ENCODE measurements at regions of chr4 and their contacts with region 1.

Region 1: GRCh38 chr4:80365928-80366327 is 30.4 kb downstream of the CFAP299 start:
- DNase-seq: peak; percentile 27 to 61
- ATAC-seq: peak; percentile 85 to 95 (median 91)
- H3K4me3 ChIP-seq: no peak overlapping the region
- H3K27ac ChIP-seq: no peak overlapping the region
- H3K4me1 ChIP-seq: peaks cover 4% of the 10 kb centered on the region
- H3K27me3 ChIP-seq: no peaks in the 10 kb centered on the region
- CTCF ChIP-seq: peak; percentile 63

Region 2: DNA sequence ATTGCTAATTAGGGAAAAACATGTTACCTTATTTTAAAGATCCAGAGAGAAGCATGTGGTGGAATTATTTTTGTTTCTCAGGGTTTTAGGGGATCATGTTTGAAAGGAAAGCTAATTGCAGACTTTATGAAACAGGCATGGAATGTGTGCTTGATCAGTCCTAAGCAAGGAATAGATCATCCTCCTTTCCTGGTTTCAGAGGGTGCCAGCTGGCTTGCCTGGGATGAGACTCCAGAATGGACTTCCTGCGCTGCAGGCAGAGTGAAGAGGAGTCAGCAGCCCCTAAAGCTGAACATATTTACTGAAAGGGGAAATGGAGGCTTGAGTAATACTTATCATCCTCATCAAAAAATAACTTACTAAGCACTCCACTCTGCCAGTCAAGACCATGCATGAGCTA is 86.2 kb before region 1 on chr4:
- intact Hi-C with region 1: no loop called
- DNase-seq: no peak
- ATAC-seq: no peak
- H3K4me3 ChIP-seq: no peak overlapping the region
- H3K27ac ChIP-seq: no peak overlapping the region
- H3K4me1 ChIP-seq: no peaks in the 10 kb centered on the region
- H3K27me3 ChIP-seq: no peaks in the 10 kb centered on the region
- CTCF ChIP-seq: no peak

Region 3: DNA sequence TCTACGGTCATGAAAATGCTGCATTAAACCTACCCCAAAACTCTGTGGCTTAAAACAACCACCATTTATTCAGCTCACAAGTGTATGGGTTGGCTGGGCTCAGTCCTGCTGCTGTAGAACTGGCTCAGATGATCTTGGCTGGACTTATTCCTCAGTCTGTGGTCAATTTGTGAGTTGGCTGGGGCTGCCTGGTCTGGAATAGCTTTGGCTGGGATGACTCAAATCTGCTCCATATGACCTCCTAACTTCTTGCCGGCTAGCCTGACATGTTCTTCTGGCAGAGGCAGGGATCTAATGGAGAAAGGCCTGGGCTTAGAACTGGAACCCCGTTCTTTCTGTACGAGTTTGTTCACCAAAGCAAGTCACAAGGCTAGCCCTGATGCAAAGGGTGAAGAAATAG is 41.3 kb after region 1 on chr4:
- intact Hi-C with region 1: no loop called
- DNase-seq: peak; percentile 23 to 36
- ATAC-seq: peak; percentile 38 to 75 (median 45)
- H3K4me3 ChIP-seq: no peak overlapping the region
- H3K27ac ChIP-seq: no peak overlapping the region
- H3K4me1 ChIP-seq: no peaks in the 10 kb centered on the region
- H3K27me3 ChIP-seq: no peaks in the 10 kb centered on the region
- CTCF ChIP-seq: no peak

Region 4: GRCh38 chr4:80989921-80990544 is 624.1 kb after region 1 on chr4:
- intact Hi-C with region 1: loop called (anchors 2 kb)
- DNase-seq: no peak
- ATAC-seq: peak in 1 of 4 donors; percentile 42
- H3K4me3 ChIP-seq: no peak overlapping the region
- H3K27ac ChIP-seq: no peak overlapping the region
- H3K4me1 ChIP-seq: no peaks in the 10 kb centered on the region
- H3K27me3 ChIP-seq: no peaks in the 10 kb centered on the region
- CTCF ChIP-seq: peak; percentile 70

Region 5: GRCh38 chr4:81040012-81040659 is 674.2 kb after region 1 on chr4:
- intact Hi-C with region 1: loop called (anchors 5 to 10 kb)
- DNase-seq: no peak
- ATAC-seq: no peak
- H3K4me3 ChIP-seq: no peak overlapping the region
- H3K27ac ChIP-seq: no peak overlapping the region
- H3K4me1 ChIP-seq: no peaks in the 10 kb centered on the region
- H3K27me3 ChIP-seq: peaks cover 0 to 2% (median 0%) of the 10 kb centered on the region in 3 donors
- CTCF ChIP-seq: peak; percentile 47

Region 6: GRCh38 chr4:81052119-81053068 is 686.5 kb after region 1 on chr4:
- intact Hi-C with region 1: loop called (anchors 5 to 10 kb)
- DNase-seq: peak; percentile 33 to 49
- ATAC-seq: peak in 2 of 4 donors; percentile 65 to 71
- H3K4me3 ChIP-seq: no peak overlapping the region
- H3K27ac ChIP-seq: no peak overlapping the region
- H3K4me1 ChIP-seq: no peaks in the 10 kb centered on the region
- H3K27me3 ChIP-seq: no peaks in the 10 kb centered on the region
- CTCF ChIP-seq: peak; percentile 60

Region 7: GRCh38 chr4:81351654-81352445 is 985.9 kb after region 1 on chr4:
- intact Hi-C with region 1: loop called in 1 of 2 experiments (anchors 10 kb)
- DNase-seq: peak; percentile 60 to 68
- ATAC-seq: peak in 2 of 4 donors; percentile 52 to 72
- H3K4me3 ChIP-seq: no peak overlapping the region
- H3K27ac ChIP-seq: no peak overlapping the region
- H3K4me1 ChIP-seq: no peaks in the 10 kb centered on the region
- H3K27me3 ChIP-seq: no peaks in the 10 kb centered on the region
- CTCF ChIP-seq: peak; percentile 72

Measured in psoas muscle (tissue), 8 donors.